MCF 10A (cell line): ENCODE measurements at regions of chr6 and their contacts with region 1.

Region 1: DNA sequence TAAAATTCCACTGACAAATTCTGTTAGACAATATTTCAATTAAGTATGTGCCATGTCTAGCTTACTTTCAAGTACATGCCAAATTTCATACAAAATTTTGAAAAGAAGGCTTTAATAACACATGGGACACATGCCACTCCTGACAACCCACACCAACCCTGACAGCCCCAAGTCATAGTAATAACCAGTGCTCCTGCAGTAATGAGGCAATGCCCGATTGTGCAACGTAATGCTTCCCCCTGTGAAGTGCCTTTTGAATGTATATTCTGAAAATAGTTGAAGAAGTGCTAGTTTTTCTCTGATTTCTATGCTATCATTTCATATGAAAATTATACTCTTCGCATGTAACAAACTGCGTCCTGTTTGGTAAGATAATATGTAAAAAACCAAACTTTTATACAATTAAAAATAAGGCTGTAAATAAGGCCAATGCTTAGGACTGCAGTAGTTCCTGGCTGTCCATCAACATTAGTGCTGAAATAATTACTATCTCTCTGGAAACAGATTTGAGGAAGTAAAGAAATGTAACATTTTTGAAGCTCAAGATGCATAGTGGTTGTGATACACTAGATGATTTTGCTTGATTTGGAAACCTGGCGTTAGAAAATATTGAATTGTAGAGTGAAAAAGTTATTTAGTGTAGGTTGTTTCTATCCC is 125.8 kb upstream of the BCLAF1 start:
- DNase-seq: peak; percentile 58
- H3K4me3 Mint-ChIP-seq: no peak overlapping the region
- H3K27ac Mint-ChIP-seq: no peak overlapping the region
- H3K4me1 Mint-ChIP-seq: no peaks in the 10 kb centered on the region
- H3K27me3 Mint-ChIP-seq: no peaks in the 10 kb centered on the region
- CTCF ChIP-seq: no peak

Region 2: GRCh38 chr6:136403166-136403980 is 12.1 kb before region 1 on chr6:
- CTCF ChIA-PET with region 1: interaction called, 4 read pairs
- POLR2A ChIA-PET with region 1: interaction called, 10 read pairs
- intact Hi-C with region 1: no loop called
- DNase-seq: peak; percentile 89
- H3K4me3 Mint-ChIP-seq: no peak overlapping the region
- H3K27ac Mint-ChIP-seq: peak overlapping the region; percentile 77
- H3K4me1 Mint-ChIP-seq: peaks cover 29% of the 10 kb centered on the region
- H3K27me3 Mint-ChIP-seq: no peaks in the 10 kb centered on the region
- CTCF ChIP-seq: no peak

Region 3: DNA sequence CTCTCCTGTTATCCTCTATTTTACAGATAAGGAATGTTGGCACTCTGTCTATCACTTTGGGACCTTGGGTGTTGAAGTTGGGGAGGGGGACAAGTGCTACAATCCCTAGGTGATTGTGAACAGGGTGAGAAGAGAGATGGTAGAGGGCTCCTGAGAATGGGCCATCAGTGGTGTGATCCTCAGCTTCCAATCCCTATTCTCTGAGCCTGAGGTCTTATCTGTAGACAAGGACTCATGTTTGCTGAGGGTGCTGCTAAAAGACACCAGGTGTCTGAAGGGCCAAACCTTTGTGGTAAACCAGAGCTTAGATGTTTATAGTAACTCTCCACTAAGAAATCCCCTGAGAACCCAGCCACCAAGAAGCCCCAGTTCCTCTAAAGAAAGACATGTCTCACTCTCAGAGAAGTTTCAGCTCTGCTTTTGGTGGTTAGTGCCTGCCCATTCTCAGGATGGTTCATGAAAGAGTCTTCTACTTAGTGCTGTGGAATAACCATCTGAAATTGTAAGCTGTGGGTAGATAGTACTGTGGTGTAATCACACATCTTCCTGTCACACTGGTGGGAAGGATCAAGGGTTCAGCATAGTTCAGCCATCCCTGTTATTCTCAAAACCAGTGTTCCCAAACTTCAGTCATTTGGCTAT is 687.5 kb after region 1 on chr6:
- CTCF ChIA-PET with region 1: no interaction called
- POLR2A ChIA-PET with region 1: no interaction called
- intact Hi-C with region 1: no loop called
- DNase-seq: no peak
- H3K4me3 Mint-ChIP-seq: no peak overlapping the region
- H3K27ac Mint-ChIP-seq: peak overlapping the region; percentile 66
- H3K4me1 Mint-ChIP-seq: peaks cover 25% of the 10 kb centered on the region
- H3K27me3 Mint-ChIP-seq: no peaks in the 10 kb centered on the region
- CTCF ChIP-seq: no peak